Aorta (tissue), 5 donors: ENCODE measurements at regions of chr9 and their contacts with region 1.

Region 1: DNA sequence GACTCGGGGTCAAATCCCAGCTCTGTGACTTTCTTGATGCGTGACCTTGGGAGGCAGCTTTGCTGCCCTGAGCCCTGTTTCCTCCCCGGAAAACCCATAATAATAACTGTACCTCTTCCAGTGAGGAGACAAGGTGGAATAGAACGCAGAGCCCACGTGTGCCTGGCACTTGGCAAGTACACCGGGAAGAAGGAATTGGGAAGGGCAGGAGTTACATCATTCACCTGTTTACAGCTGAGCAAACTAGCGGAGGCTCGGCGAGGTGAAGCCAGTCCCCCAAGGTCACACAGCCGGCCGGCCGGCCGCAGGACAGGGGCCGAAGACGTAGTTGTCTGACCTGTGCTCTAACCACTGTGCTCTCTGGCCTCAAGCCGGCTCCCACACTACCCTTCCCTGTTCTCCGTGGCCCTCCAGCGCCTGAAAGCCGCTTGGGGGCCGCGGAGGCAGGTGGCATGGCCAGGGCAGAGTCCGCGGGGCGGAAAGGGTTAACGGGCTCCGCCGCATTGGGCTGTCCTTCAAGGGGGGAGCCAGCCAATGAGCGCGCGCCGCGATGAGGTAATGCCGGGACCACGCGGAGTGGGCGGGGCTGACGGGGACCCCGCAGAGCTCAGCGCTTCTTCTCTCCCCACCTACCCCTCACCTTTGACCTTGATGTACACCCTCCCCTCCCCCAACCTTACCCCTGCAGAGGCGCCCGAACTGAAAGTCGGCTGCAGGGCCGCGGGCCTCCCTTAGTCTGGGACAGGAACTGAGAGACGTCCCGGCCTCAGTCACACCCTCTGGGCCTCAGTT is 125.2 kb downstream of the C9orf50 start:
- DNase-seq: peak; percentile 96 to 98
- ATAC-seq: peak; percentile 90
- H3K4me3 ChIP-seq: peak overlapping the region; percentile 10 to 55
- H3K27ac ChIP-seq: peak overlapping the region; percentile 65 to 87
- H3K4me1 ChIP-seq: no peaks in the 10 kb centered on the region
- H3K27me3 ChIP-seq: no peaks in the 10 kb centered on the region

Region 2: DNA sequence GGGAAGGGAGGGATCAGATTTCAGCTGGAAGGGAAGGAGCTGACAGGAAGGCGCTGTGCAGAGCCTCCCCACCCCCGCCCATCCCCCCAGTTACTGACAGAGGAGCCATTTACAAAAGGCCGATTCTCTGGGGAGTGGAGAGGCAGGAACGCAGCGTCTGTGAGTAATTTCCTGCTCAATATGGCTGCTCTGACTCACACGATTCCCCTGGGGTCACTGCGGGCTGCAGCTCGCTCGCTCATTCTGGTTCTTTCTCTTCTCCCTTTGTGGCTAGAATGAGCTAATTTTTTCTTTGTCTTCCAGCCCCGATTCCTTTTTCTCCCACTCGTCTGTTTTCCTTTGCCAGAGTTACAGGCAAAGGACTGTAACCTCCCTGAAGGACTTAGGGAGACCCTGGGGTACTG is 355.7 kb before region 1 on chr9:
- intact Hi-C with region 1: loop called (anchors 2 to 5 kb)
- DNase-seq: peak; percentile 96
- ATAC-seq: peak; percentile 89
- H3K4me3 ChIP-seq: no peak overlapping the region
- H3K27ac ChIP-seq: peak overlapping the region; percentile 99 to 100
- H3K4me1 ChIP-seq: peaks cover 0 to 4% of the 10 kb centered on the region in 2 donors
- H3K27me3 ChIP-seq: no peaks in the 10 kb centered on the region

Region 3: GRCh38 chr9:129549685-129550084 is 54.0 kb after region 1 on chr9:
- intact Hi-C with region 1: loop called (anchors 2 to 5 kb)
- DNase-seq: peak; percentile 75 to 86
- ATAC-seq: peak; percentile 57
- H3K4me3 ChIP-seq: peak overlapping the region; percentile 28 to 35
- H3K27ac ChIP-seq: peak overlapping the region in 1 of 2 donors; percentile 95
- H3K4me1 ChIP-seq: no peaks in the 10 kb centered on the region
- H3K27me3 ChIP-seq: no peaks in the 10 kb centered on the region

Region 4: DNA sequence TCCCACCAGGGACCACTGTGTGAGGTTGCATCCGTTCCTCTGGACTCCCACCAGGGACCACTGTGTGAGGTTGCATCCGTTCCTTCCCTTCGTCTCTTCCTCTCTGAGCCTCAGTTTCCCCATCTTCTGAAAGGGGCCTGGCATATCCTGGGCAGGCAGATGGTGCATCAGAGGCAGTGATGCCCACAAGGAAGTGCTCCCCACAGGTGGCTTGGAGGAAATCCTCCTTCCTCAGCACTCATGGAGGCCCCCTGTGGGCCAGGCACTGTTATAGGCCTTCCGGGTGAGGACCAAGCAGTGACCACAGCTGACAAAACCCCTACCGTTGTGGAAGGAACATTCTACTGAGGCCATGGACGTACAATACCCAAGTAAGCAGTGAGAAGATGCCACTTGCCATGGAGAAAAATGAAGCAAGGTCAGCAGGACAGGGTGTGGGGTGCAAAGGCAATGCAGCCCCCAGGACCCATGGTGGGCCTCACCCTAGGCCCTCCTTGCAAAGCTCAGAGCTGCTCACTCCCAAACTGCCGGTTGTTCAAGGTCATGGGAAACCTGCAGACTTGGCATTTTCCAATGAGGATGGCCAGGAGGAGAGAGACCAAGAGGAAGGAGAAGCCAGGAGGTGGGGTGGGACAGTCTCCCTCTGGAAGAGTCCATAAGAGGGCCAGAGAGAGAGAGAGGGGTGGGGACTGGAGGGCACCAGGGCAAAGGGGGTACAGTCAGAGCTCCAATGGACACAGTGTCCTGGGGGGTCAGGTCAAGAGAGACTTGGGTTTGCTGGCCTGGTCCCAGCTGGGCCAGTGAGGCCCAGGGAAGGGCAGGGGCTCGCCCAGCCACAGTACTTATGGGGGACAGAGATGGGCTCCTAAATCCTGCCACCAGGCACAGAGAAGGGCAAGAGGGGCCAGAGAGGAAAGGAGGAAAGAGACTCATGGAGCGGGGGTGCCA is 74.0 kb after region 1 on chr9:
- intact Hi-C with region 1: loop called in 1 of 2 experiments (anchors 2 kb)
- DNase-seq: no peak
- ATAC-seq: peak; percentile 21
- H3K4me3 ChIP-seq: no peak overlapping the region
- H3K27ac ChIP-seq: peak overlapping the region in 1 of 2 donors; percentile 66
- H3K4me1 ChIP-seq: no peaks in the 10 kb centered on the region
- H3K27me3 ChIP-seq: no peaks in the 10 kb centered on the region